Thyroid gland (tissue), 4 donors: ENCODE measurements at regions of chr16 and their contacts with region 1.

Region 1: GRCh38 chr16:75385507-75386152 is 47.7 kb downstream of the CFDP1 start:
- DNase-seq: no peak
- H3K4me3 ChIP-seq: no peak overlapping the region
- H3K27ac ChIP-seq: no peak overlapping the region
- H3K4me1 ChIP-seq: peaks cover 4 to 10% of the 10 kb centered on the region in 2 donors
- H3K27me3 ChIP-seq: no peaks in the 10 kb centered on the region
- CTCF ChIP-seq: peak; percentile 58 to 94 (median 66)
- POLR2A ChIP-seq: no peak

Region 2: DNA sequence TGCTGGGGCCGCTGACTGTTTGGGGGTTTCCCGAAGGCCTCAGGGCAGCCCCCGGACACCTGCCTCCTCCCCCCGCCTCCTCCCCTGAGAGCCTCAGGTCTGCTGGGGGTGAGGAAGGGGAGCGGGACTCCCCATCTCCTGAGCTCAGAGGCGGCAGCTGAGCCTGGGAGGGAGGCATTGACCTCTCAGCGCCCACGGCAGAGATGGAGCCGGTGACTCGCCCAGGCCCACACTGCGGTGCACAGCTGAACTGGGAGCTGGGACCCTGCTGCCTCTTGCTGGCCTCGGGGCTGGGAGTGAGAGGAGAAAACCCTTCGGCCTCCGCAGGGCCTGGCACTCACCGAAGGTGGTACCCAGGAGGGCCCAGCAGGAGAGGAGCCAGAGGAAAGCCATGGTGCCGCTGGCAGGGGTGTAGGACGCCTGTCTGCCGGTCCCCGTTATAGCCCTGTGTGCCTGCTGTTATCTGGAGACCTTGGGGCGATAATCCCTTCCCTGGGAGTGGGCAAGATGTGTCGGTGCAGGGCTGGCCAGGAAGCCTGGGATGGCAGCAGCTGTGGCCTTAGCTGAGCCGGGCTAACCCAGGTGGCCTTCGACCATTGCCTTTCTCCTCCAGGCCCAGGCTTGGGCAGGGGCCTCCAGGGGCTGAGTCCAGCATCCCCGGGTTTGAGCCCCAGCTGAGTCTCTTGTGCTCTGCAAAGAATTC is 178.7 kb before region 1 on chr16 and contains the start of gene CTRB2:
- intact Hi-C with region 1: loop called (anchors 10 kb)
- DNase-seq: no peak
- H3K4me3 ChIP-seq: no peak within 1 kb of the TSS
- H3K27ac ChIP-seq: peak within 1 kb of the TSS in 1 of 3 donors; percentile 6
- H3K4me1 ChIP-seq: peaks cover 0 to 11% of the 10 kb centered on the region in 2 donors
- H3K27me3 ChIP-seq: no peaks in the 10 kb centered on the region
- CTCF ChIP-seq: no peak
- POLR2A ChIP-seq: no peak
- total RNA-seq, gene CTRB2: not detected

Region 3: DNA sequence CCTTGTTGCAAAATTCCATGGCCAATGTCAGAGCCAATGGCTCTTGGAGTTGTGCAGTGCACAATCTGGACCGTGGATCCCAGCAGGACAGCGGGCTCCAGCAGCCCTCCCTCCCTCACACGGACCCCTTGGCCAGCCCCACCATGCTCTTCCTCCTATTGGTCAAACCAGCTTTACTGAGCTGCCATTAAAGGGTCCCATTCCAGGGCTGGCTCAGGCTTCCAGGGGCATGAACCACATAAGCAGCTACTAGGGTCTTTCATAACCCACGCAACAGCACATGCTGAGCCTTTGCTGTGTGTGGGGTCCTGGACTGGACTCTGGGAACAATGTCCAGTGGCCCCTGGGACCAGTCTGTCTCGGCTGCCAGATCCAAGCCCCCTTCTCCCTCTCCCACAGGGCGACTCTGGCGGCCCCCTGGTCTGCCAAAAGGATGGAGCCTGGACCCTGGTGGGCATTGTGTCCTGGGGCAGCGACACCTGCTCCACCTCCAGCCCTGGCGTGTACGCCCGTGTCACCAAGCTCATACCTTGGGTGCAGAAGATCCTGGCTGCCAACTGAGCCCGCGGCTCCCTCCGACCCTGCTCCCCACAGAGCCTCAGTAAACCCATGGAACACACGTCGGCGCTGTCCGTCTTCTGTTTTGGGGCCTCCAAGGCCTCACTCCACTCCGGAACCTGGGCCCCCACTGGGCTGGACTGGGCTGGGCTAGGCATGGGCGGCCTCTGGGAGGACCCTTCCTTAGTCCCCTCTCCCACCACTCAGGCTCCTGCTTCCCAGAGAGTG is 161.1 kb before region 1 on chr16:
- intact Hi-C with region 1: no loop called
- DNase-seq: no peak
- H3K4me3 ChIP-seq: no peak overlapping the region
- H3K27ac ChIP-seq: no peak overlapping the region
- H3K4me1 ChIP-seq: peaks cover under 1 to 5% of the 10 kb centered on the region in 2 donors
- H3K27me3 ChIP-seq: no peaks in the 10 kb centered on the region
- CTCF ChIP-seq: no peak
- POLR2A ChIP-seq: no peak

Region 4: DNA sequence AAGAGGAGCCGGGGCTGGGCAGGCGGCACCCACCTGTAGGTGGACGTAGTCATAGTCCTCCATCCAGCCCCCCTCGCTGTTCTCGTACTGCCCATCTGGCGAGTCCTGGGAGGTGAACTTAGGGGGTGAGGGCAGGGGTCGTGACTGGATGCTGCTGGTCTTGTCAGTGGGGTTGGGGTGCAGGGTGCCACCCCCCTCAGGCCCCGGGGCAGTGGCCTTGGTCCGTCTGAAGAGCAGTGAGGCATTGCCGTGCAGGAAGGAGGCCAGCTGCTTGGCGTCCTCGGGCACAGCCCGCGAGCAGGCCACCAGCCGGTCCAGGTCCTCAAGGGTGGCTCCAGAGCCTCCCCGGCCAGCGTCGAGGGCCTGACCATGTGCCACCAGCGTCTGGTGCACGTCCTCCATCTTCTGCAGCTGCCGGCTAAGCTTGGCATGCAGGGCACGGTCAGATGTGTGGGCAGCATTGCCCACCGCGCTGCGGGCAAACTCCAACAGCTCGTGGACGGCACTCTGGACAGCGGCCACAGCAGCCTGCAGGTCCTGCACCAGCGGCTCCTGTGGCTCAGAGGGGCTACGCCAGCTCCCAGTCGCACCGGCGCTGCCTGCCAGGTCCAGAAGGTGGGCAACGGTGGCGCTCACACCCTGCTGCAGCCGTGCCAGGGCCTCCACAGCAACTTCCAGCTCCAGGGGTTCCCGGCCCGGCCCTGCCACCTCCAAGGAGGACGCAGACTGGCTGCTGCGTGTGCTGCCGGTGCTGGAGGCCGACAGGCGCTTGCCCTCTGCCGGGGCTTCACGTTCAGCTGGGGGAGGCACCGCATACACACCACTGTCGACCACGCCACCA is 150.6 kb before region 1 on chr16:
- intact Hi-C with region 1: loop called (anchors 2 kb)
- DNase-seq: no peak
- H3K4me3 ChIP-seq: no peak overlapping the region
- H3K27ac ChIP-seq: peak overlapping the region in 2 of 3 donors; percentile 17 to 26
- H3K4me1 ChIP-seq: peaks cover 24 to 39% of the 10 kb centered on the region in 2 donors
- H3K27me3 ChIP-seq: no peaks in the 10 kb centered on the region
- CTCF ChIP-seq: no peak
- POLR2A ChIP-seq: no peak